Calu3 (cell line): ENCODE measurements at regions of chr4 and their contacts with region 1.

Region 1: DNA sequence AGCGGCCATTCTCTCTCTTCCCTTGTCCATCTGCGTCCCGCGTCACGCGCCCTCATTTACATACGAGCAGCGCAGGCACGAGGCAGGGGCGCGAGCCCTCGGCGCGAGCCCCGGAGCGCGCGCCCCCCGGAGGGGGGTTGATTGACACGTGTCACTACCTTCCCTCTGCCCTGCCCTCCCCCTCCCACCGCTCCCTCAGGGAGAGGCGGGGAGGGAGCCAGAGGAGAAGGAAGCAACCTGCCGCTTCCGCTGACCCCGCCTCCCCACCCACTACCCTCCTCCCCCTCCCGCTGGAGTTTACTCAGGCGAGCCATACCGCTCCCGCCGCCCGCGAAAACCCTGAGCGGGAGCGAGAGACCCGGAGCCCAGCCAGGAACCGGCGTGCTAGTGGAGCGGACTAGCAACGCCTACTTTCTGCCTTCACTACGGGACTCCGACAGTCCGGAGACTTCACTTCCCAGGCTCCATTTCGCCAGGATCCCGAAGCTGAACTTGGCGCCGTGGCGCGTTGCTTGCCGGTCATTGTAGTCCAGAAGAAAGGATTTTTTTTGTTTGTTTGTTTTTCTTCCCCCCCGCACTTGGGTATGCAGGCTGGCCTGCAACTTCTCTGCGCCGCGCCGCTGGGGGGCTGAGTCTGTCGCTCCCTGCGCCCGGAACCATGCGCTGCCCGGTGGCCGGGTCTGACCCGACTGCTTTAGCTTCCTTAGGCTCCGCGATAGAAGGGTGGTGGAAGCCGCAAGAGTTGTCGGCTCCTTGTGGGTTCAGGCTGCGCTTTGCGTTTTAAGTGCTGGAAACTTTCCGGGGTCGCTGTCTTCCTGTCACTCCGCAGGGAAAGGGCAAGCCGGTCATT is at the start of gene LCORL:
- DNase-seq: peak; percentile 89
- H3K4me3 Mint-ChIP-seq: peak within 1 kb of the TSS; percentile 94
- H3K27ac Mint-ChIP-seq: peak within 1 kb of the TSS; percentile 79
- H3K4me1 Mint-ChIP-seq: no peaks in the 10 kb centered on the region
- H3K27me3 Mint-ChIP-seq: peaks cover 14% of the 10 kb centered on the region
- CTCF ChIP-seq: no peak
- total RNA-seq, gene LCORL: 14.4 and 15.4 TPM in 2 replicates

Region 2: GRCh38 chr4:17576932-17577665 is 444.8 kb before region 1 on chr4 and contains the start of gene LAP3:
- CTCF ChIA-PET with region 1: no interaction called
- intact Hi-C with region 1: no loop called
- DNase-seq: peak; percentile 95
- H3K4me3 Mint-ChIP-seq: peak within 1 kb of the TSS; percentile 96
- H3K27ac Mint-ChIP-seq: peak within 1 kb of the TSS; percentile 76
- H3K4me1 Mint-ChIP-seq: no peaks in the 10 kb centered on the region
- H3K27me3 Mint-ChIP-seq: no peaks in the 10 kb centered on the region
- CTCF ChIP-seq: no peak
- total RNA-seq, gene LAP3: 70.6 and 123 TPM in 2 replicates

Region 3: DNA sequence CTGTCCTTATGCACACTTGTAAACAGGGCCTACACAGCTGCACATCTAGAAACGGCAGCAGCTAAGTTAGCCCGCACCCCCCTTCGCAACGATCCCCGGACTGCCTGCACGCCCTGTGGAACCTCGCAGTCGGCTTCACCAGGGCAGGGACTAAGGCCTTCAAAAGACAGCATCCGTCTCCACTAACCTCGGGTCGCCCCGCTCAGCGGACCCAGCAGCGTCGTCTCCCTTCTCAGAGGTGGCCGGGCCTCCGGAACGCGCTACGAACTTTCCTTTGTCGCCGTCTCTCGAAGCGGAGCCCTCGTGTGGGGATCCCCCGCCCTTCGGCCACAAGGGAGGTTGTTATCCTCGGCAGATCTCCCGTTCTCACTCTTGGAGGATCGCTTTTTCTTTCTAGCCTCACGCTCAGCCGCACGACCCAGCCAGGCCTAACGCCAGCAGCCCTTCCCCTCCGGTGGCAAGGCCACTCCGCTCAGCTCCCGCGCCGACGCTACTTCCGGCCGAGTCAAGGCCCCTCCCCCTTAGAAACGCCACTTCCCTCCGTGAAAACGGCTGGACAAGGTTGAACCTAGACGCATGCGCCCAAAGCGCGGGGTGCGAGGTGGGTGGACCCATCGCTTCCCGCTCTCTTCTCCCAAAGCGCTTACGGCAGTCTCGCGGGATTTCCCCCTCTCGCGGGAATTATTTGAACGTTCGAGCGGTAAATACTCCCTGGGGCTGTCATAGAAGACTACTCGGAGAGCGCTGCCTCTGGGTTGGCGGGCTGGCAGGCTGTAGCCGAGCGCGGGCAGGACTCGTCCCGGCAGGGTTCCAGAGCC is 211.5 kb before region 1 on chr4 and contains the starts of genes DCAF16 and NCAPG:
- CTCF ChIA-PET with region 1: no interaction called
- intact Hi-C with region 1: loop called (anchors 10 kb)
- DNase-seq: peak; percentile 97
- H3K4me3 Mint-ChIP-seq: peak within 1 kb of the TSS; percentile 91
- H3K27ac Mint-ChIP-seq: peak within 1 kb of the TSS; percentile 89
- H3K4me1 Mint-ChIP-seq: peaks cover 9% of the 10 kb centered on the region
- H3K27me3 Mint-ChIP-seq: no peaks in the 10 kb centered on the region
- CTCF ChIP-seq: no peak
- total RNA-seq, gene DCAF16: 34.8 and 39.0 TPM in 2 replicates
- total RNA-seq, gene NCAPG: 26.9 and 35.3 TPM in 2 replicates

Region 4: DNA sequence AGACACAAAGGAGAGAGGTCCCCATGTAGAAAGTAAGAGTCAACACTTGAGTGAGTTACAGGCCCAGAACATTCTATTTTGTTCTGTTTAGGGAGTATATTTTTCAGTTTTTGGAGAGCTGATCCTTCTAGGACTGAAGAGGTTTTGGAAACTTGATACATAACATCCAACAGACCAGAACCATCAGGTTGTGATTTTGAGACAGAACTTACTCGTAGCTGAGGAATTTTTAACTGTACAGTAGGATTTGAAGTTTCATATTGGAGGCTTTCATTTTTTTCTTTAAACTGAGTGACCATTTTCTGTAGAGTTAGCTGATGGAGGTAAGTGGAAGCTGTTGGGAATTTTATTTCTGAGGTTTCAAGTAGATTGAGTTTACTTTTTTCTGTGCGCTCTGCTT is 137.9 kb before region 1 on chr4:
- CTCF ChIA-PET with region 1: no interaction called
- intact Hi-C with region 1: loop called (anchors 5 kb)
- DNase-seq: no peak
- H3K4me3 Mint-ChIP-seq: no peak overlapping the region
- H3K27ac Mint-ChIP-seq: no peak overlapping the region
- H3K4me1 Mint-ChIP-seq: no peaks in the 10 kb centered on the region
- H3K27me3 Mint-ChIP-seq: no peaks in the 10 kb centered on the region
- CTCF ChIP-seq: no peak

Region 5: DNA sequence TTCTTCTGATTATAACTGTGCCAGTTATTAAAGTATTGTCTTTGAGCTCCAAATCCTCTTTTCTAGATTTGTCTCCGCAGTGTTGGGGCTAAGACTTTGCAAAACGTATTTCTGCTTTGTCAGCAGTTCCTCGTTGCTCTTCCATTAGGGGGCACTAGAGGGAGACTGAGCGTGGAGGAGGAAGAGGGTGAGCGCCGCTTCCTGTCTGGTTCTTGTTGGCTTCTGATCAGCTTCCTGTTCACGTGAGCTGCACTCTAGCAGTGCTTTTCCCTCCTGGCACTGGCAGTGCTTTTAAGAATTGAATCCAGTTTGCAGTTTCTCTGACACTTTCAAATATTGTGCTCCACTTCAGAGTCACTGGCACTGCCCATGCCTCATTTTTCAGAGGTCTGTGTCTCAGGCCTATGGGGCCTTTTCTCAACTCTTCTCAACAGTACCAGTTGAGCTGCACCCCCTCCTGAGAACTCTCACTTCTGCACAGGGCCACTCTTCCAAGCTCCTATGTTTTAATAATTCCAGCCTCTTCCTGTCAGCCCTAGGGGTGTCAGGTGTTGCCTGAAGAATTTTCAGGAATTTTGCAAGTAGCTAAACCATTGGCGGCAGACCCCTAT is 54.0 kb after region 1 on chr4:
- CTCF ChIA-PET with region 1: no interaction called
- intact Hi-C with region 1: no loop called
- DNase-seq: no peak
- H3K4me3 Mint-ChIP-seq: no peak overlapping the region
- H3K27ac Mint-ChIP-seq: no peak overlapping the region
- H3K4me1 Mint-ChIP-seq: no peaks in the 10 kb centered on the region
- H3K27me3 Mint-ChIP-seq: no peaks in the 10 kb centered on the region
- CTCF ChIP-seq: no peak

Region 6: GRCh38 chr4:18100657-18101056 is 78.7 kb after region 1 on chr4:
- CTCF ChIA-PET with region 1: no interaction called
- intact Hi-C with region 1: no loop called
- DNase-seq: no peak
- H3K4me3 Mint-ChIP-seq: no peak overlapping the region
- H3K27ac Mint-ChIP-seq: no peak overlapping the region
- H3K4me1 Mint-ChIP-seq: peaks cover 6% of the 10 kb centered on the region
- H3K27me3 Mint-ChIP-seq: no peaks in the 10 kb centered on the region
- CTCF ChIP-seq: no peak

Region 7: GRCh38 chr4:18111081-18111480 is 89.1 kb after region 1 on chr4:
- CTCF ChIA-PET with region 1: no interaction called
- intact Hi-C with region 1: loop called (anchors 5 kb)
- DNase-seq: no peak
- H3K4me3 Mint-ChIP-seq: no peak overlapping the region
- H3K27ac Mint-ChIP-seq: no peak overlapping the region
- H3K4me1 Mint-ChIP-seq: peaks cover 33% of the 10 kb centered on the region
- H3K27me3 Mint-ChIP-seq: no peaks in the 10 kb centered on the region
- CTCF ChIP-seq: no peak